ENCODE measurements at regions of chr14 and their contacts with region 1.

Region 1: DNA sequence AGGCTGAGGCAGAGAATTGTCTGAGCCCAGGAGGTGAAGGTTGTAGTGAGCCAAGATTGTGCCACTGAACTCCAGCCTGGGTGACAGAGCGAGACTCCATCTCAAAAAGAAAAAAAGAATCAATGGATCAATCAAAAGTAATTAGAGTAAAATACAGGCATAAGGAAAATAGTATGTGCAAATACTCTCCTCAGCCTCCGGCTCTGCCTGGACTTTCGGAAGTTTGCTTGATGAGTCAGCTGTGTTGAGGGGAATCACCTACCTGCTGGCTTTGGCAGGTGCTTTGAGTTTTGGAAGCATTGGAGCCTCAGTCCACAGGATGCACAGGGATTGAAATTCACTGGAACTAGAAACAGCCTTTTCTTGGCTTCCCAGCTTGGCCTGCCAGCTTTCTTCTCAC is 268.2 kb downstream of the PCNX1 start:
- DNase-seq: peak; percentile 91
- ATAC-seq: peak; percentile 99
- H3K4me3 ChIP-seq: no peak overlapping the region
- H3K27ac ChIP-seq: no peak overlapping the region
- H3K4me1 ChIP-seq: peaks cover 20% of the 10 kb centered on the region
- H3K27me3 ChIP-seq: no peaks in the 10 kb centered on the region
- CTCF ChIP-seq: no peak

Region 2: GRCh38 chr14:71214241-71214640 is 38.8 kb after region 1 on chr14:
- CTCF ChIA-PET with region 1: no interaction called
- POLR2A ChIA-PET with region 1: no interaction called
- intact Hi-C with region 1: loop called (anchors 2 kb)
- DNase-seq: peak; percentile 50
- ATAC-seq: peak; percentile 91
- H3K4me3 ChIP-seq: no peak overlapping the region
- H3K27ac ChIP-seq: no peak overlapping the region
- H3K4me1 ChIP-seq: peaks cover 17% of the 10 kb centered on the region
- H3K27me3 ChIP-seq: no peaks in the 10 kb centered on the region
- CTCF ChIP-seq: no peak

Region 3: DNA sequence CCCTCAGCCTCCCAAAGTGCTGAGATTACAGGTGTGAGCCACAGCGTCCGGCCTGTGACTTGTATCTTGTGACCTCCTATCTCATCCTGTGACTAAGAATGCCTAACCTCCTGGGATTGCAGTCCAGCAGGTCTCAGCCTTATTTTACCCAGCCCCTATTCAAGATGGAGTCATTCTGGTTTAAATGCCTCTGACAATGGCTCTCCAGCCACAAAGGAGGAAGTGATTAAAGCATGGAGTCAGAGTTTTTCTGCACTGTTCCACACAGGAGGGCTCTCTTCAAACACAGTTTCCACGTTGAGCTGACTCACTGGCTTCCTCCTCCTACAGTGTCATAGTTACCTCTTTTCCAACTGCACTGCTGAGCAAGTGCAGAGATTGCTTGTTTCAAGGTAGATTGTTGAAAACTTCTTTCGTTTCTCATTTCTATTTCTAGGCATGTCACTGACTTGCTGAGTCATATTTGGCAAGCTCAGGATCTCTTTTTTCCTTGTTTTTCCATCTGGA is 115.6 kb after region 1 on chr14:
- CTCF ChIA-PET with region 1: no interaction called
- POLR2A ChIA-PET with region 1: no interaction called
- intact Hi-C with region 1: loop called (anchors 2 kb)
- DNase-seq: peak; percentile 99
- ATAC-seq: peak; percentile 95
- H3K4me3 ChIP-seq: no peak overlapping the region; the same call in 1 of the 2 replicates
- H3K27ac ChIP-seq: peak overlapping the region; percentile 94
- H3K4me1 ChIP-seq: peaks cover 46% of the 10 kb centered on the region
- H3K27me3 ChIP-seq: no peaks in the 10 kb centered on the region
- CTCF ChIP-seq: no peak

Region 4: GRCh38 chr14:71371711-71372396 is 196.4 kb after region 1 on chr14:
- CTCF ChIA-PET with region 1: no interaction called
- POLR2A ChIA-PET with region 1: interaction called, 14 read pairs
- intact Hi-C with region 1: no loop called
- DNase-seq: peak; percentile 78
- ATAC-seq: peak; percentile 98
- H3K4me3 ChIP-seq: peak overlapping the region; percentile 51
- H3K27ac ChIP-seq: peak overlapping the region; percentile 89
- H3K4me1 ChIP-seq: peaks cover 30% of the 10 kb centered on the region
- H3K27me3 ChIP-seq: no peaks in the 10 kb centered on the region
- CTCF ChIP-seq: no peak